ENCODE measurements at regions of chr1 and their contacts with region 1.

Region 1: DNA sequence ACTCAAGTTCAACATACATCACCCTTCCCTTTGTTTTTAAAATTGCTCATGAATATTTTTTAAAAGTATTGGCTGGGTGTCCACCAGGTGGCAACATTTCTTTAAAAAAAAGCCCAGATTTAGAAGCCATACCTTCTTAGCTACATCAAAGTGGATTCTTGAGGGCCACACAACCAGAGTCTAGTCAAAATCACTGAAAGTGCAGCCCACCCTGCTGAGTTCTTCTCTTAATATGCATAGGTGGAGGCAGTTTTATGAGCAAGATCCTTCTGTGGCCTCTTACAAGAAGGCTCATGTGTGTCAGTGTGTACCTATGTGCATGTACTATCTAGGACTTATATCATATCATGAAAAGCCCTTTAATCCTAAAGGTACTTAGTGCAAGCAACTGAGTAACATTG is 16.9 kb upstream of the GNG12 start:
- DNase-seq: peak; percentile 49

Region 2: GRCh38 chr1:67766141-67766978 is 83.8 kb before region 1 on chr1:
- CTCF ChIA-PET with region 1: interaction called, 23 read pairs
- POLR2A ChIA-PET with region 1: no interaction called
- DNase-seq: peak; percentile 67

Region 3: GRCh38 chr1:67838180-67838910 is 11.8 kb before region 1 on chr1:
- CTCF ChIA-PET with region 1: interaction called, 14 read pairs
- POLR2A ChIA-PET with region 1: no interaction called
- DNase-seq: no peak

Measured in HEK293T (cell line).